ENCODE measurements at regions of chr1 and their contacts with region 1.

Region 1: DNA sequence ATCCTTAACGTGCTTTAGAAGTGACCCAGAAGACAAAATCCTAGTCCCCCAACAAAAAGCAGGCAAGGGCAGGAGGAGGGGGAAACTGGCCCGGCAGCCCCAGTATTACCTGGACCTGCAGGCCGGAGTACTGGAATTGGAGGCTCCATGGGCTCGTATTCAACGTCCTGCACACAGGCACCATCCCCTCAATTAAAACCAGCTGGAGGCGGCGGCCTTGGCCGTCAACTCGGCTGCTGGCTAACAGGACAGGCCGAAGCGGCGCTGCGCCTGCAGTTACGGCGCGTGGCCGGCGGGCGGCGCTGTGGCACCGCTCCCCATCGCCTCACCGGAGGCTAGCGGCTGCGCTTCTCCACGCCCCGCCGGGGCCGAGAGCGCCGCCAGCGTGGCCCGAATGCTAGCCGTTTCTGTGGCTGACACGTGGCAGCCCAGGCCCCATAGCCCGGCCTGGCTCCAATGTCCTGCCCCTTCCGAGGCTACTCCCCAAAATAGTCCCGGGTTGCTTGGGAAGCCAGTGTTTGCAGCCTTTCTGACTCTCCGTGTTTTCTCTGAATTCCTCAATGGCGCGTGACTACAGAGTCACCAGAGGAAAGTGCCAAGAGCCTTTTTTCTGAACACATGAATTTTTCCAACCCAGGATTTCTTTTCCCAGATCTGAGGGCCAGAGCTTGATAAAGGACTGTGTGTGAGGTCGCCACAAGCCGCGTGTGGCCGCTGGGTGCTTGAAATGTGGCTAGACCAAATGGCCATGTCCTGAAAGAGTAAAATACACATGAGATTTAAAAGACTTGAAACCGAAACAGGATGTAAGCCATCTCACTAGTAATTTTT is 82.5 kb downstream of the HHIPL2 start:
- DNase-seq: peak; percentile 88 to 96 (median 93)
- ATAC-seq: peak; percentile 100
- H3K4me3 ChIP-seq: peak overlapping the region; percentile 19 to 38
- H3K27ac ChIP-seq: peak overlapping the region; percentile 83
- H3K4me1 ChIP-seq: peaks cover 0 to 17% of the 10 kb centered on the region in 2 donors
- H3K27me3 ChIP-seq: no peaks in the 10 kb centered on the region
- CTCF ChIP-seq: peak; percentile 99 to 100

Region 2: GRCh38 chr1:222634180-222635013 is 169.0 kb after region 1 on chr1:
- intact Hi-C with region 1: loop called in 1 of 2 experiments (anchors 5 kb)
- DNase-seq: peak in 2 of 4 donors; percentile 79 to 86
- ATAC-seq: peak; percentile 95
- H3K4me3 ChIP-seq: no peak overlapping the region
- H3K27ac ChIP-seq: no peak overlapping the region
- H3K4me1 ChIP-seq: no peaks in the 10 kb centered on the region
- H3K27me3 ChIP-seq: no peaks in the 10 kb centered on the region
- CTCF ChIP-seq: peak; percentile 77 to 83

Region 3: DNA sequence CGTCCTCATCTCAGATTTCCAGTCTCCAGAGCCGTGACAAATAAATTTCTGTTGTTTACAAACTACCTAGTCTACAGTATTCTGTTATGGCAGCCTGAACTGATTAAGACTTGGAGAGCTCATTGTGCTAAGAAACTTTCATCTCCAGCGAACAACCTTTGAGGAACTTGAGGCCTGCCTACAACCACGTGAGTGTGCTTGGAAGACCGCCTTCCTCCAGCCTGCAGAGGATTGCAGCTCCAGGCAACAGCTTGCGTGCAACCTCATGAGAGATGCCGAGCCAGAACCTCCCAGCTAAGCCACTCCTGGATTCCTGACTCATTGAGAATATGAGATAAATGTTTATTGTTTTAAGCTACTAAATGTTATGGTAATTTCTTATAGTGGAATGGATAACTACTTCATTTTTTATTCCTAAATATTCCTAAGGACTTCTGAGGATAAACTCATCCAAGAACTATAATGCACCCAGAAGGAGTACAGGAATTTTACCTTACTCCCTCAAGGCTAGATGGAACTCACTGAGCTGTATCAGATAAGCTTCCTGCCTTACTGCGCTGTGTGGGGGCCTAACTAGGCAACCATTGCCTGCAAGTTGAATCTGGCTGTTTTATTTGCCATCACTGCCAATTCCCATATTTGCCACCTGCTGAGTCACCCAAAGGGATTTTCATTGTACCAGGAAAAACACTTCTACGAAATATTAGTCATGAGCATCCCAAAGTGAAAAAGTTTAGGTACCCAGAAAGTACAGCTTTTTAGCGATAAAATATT is 289.1 kb after region 1 on chr1:
- intact Hi-C with region 1: no loop called
- DNase-seq: peak in 1 of 4 donors; percentile 70
- ATAC-seq: peak; percentile 76
- H3K4me3 ChIP-seq: no peak overlapping the region
- H3K27ac ChIP-seq: no peak overlapping the region
- H3K4me1 ChIP-seq: no peaks in the 10 kb centered on the region
- H3K27me3 ChIP-seq: no peaks in the 10 kb centered on the region
- CTCF ChIP-seq: no peak

Measured in left lung (tissue), 14 donors.